ENCODE measurements at regions of chr5 and their contacts with region 1.

Region 1: GRCh38 chr5:93607367-93608258 is 24.6 kb downstream of the NR2F1 start:
- DNase-seq: peak; percentile 53
- ATAC-seq: peak; percentile 81
- H3K4me3 Mint-ChIP-seq: no peak overlapping the region
- H3K27ac Mint-ChIP-seq: no peak overlapping the region
- H3K4me1 Mint-ChIP-seq: peaks cover 21% of the 10 kb centered on the region
- H3K27me3 Mint-ChIP-seq: peaks cover 82% of the 10 kb centered on the region

Region 2: DNA sequence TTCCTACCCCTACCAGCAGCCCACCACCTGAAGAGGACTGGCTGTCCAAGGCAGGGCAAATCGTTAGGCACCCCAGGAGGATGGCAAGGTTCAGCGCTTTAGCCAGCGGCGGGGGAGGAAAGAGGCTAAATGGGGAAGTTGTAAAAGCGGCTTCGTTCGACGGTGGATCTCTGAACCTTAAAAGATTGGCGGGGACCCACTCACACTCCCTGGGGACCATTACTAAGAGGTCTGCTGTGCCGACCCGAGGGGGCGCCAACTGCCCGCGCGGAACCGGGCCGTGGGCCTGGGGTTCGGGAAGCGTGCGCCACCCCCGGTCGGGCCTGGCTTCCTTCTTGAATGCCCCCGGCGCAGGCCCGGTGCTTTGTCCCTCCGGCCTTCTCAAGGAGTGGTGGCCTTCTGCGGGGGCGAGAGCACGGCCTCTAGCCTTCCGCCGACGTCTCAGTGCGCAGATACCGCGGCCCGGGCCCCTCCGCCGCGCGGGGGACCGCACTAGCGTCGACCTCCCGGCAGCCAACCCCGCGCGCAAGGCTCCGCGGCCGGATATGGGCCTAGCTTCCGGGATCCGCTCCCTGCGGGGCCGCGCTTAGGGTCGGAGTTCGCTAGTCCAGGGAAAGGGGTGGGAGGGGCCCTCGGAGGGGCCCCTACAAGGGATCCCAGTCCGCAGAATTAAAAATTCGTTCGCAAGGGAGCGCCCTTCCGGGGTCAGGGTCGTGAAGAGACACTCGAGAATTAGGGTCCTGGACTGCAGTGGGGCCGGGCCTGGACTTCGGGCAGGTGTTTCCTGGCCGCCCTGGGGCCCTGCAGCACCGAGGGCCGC is 37.1 kb before region 1 on chr5:
- CTCF ChIA-PET with region 1: interaction called, 5 read pairs
- POLR2A ChIA-PET with region 1: no interaction called
- intact Hi-C with region 1: loop called (anchors 1 to 5 kb)
- DNase-seq: peak; percentile 33
- ATAC-seq: peak; percentile 44
- H3K4me3 Mint-ChIP-seq: no peak overlapping the region
- H3K27ac Mint-ChIP-seq: no peak overlapping the region
- H3K4me1 Mint-ChIP-seq: peaks cover 24% of the 10 kb centered on the region
- H3K27me3 Mint-ChIP-seq: peaks cover 68% of the 10 kb centered on the region

Region 3: GRCh38 chr5:93620487-93621326 is 13.1 kb after region 1 on chr5:
- CTCF ChIA-PET with region 1: interaction called, 8 read pairs
- POLR2A ChIA-PET with region 1: interaction called, 4 read pairs
- intact Hi-C with region 1: loop called in 1 of 2 experiments (anchors 1 kb)
- DNase-seq: peak; percentile 77
- ATAC-seq: peak; percentile 82
- H3K4me3 Mint-ChIP-seq: peak overlapping the region; percentile 78
- H3K27ac Mint-ChIP-seq: peak overlapping the region; percentile 62
- H3K4me1 Mint-ChIP-seq: peaks cover 28% of the 10 kb centered on the region
- H3K27me3 Mint-ChIP-seq: peaks cover 18% of the 10 kb centered on the region

Region 4: GRCh38 chr5:93915142-93915553 is 307.5 kb after region 1 on chr5:
- CTCF ChIA-PET with region 1: interaction called, 4 read pairs
- POLR2A ChIA-PET with region 1: no interaction called
- intact Hi-C with region 1: loop called in 1 of 2 experiments (anchors 2 kb)
- DNase-seq: no peak
- ATAC-seq: peak; percentile 73
- H3K4me3 Mint-ChIP-seq: no peak overlapping the region
- H3K27ac Mint-ChIP-seq: no peak overlapping the region
- H3K4me1 Mint-ChIP-seq: no peaks in the 10 kb centered on the region
- H3K27me3 Mint-ChIP-seq: no peaks in the 10 kb centered on the region

Region 5: GRCh38 chr5:93929131-93929530 is 321.5 kb after region 1 on chr5:
- CTCF ChIA-PET with region 1: no interaction called
- POLR2A ChIA-PET with region 1: no interaction called
- intact Hi-C with region 1: no loop called
- DNase-seq: no peak
- ATAC-seq: no peak
- H3K4me3 Mint-ChIP-seq: no peak overlapping the region
- H3K27ac Mint-ChIP-seq: no peak overlapping the region
- H3K4me1 Mint-ChIP-seq: no peaks in the 10 kb centered on the region
- H3K27me3 Mint-ChIP-seq: no peaks in the 10 kb centered on the region

Region 6: DNA sequence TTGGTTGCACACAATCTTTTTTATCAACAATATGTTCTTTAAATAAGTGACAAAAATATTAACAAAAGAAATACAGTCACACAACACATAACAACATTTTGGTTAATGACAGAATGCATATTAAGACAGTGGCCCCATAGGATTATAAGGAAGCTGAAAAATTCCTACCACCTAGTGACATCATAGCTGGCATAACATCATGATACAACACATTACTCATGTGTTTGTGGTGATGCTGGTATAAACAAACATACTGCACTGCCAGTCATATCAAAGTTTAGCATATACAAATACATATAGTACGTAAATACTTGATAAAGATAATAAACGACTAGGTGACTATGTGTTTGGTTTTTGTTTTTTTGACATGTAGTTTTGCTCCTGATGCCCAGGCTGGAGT is 478.6 kb after region 1 on chr5:
- CTCF ChIA-PET with region 1: no interaction called
- POLR2A ChIA-PET with region 1: no interaction called
- intact Hi-C with region 1: no loop called
- DNase-seq: no peak
- ATAC-seq: no peak
- H3K4me3 Mint-ChIP-seq: no peak overlapping the region
- H3K27ac Mint-ChIP-seq: no peak overlapping the region
- H3K4me1 Mint-ChIP-seq: peaks cover 10% of the 10 kb centered on the region
- H3K27me3 Mint-ChIP-seq: no peaks in the 10 kb centered on the region

Region 7: GRCh38 chr5:95274011-95274410 is 1666.4 kb after region 1 on chr5:
- CTCF ChIA-PET with region 1: no interaction called
- POLR2A ChIA-PET with region 1: no interaction called
- intact Hi-C with region 1: no loop called
- DNase-seq: no peak
- ATAC-seq: no peak
- H3K4me3 Mint-ChIP-seq: no peak overlapping the region
- H3K27ac Mint-ChIP-seq: no peak overlapping the region
- H3K4me1 Mint-ChIP-seq: no peaks in the 10 kb centered on the region
- H3K27me3 Mint-ChIP-seq: peaks cover 16% of the 10 kb centered on the region

Measured in activated CD4-positive, alpha-beta T cell treated with anti-CD3 and anti-CD28 coated beads for 36 hours (primary cell).